Naive thymus-derived CD4-positive, alpha-beta T cell (primary cell): ENCODE measurements at regions of chr18 and their contacts with region 1.

Region 1: GRCh38 chr18:57621246-57621604 is 411 bp downstream of the NARS1 start:
- DNase-seq: no peak
- ATAC-seq: peak; percentile 4
- H3K4me3 ChIP-seq: peak overlapping the region; percentile 84
- H3K4me3 Mint-ChIP-seq: peak overlapping the region; percentile 89 to 99 (median 96)
- H3K27ac ChIP-seq: peak overlapping the region; percentile 85
- H3K27ac Mint-ChIP-seq: peak overlapping the region; percentile 93 to 99 (median 98)
- H3K4me1 ChIP-seq: peaks cover 13 to 19% of the 10 kb centered on the region in 2 donors
- H3K4me1 Mint-ChIP-seq: peaks cover 9 to 44% (median 34%) of the 10 kb centered on the region in 7 donors
- H3K27me3 ChIP-seq: no peaks in the 10 kb centered on the region
- H3K27me3 Mint-ChIP-seq: no peaks in the 10 kb centered on the region

Region 2: GRCh38 chr18:57586251-57587049 is 34.8 kb before region 1 on chr18 and contains the start of gene FECH:
- CTCF ChIA-PET with region 1: no interaction called
- POLR2A ChIA-PET with region 1: interaction called, 6 read pairs
- intact Hi-C with region 1: loop called (anchors 1 kb)
- DNase-seq: peak; percentile 59 to 81 (median 73)
- ATAC-seq: peak; percentile 98
- H3K4me3 ChIP-seq: peak within 1 kb of the TSS; percentile 61
- H3K4me3 Mint-ChIP-seq: peak within 1 kb of the TSS; percentile 81 to 95 (median 89)
- H3K27ac ChIP-seq: peak within 1 kb of the TSS; percentile 75
- H3K27ac Mint-ChIP-seq: peak within 1 kb of the TSS; percentile 65 to 90 (median 83)
- H3K4me1 ChIP-seq: peaks cover 9 to 11% of the 10 kb centered on the region in 2 donors
- H3K4me1 Mint-ChIP-seq: peaks cover 10 to 35% (median 23%) of the 10 kb centered on the region in 7 donors
- H3K27me3 ChIP-seq: no peaks in the 10 kb centered on the region
- H3K27me3 Mint-ChIP-seq: no peaks in the 10 kb centered on the region
- total RNA-seq, gene FECH: 11.7 to 15.3 (median 13.5) TPM

Region 3: GRCh38 chr18:58124475-58124874 is 503.2 kb after region 1 on chr18:
- CTCF ChIA-PET with region 1: no interaction called
- POLR2A ChIA-PET with region 1: no interaction called
- intact Hi-C with region 1: loop called in 1 of 2 experiments (anchors 5 kb)
- DNase-seq: no peak
- ATAC-seq: no peak
- H3K4me3 ChIP-seq: no peak overlapping the region
- H3K4me3 Mint-ChIP-seq: no peak overlapping the region
- H3K27ac ChIP-seq: no peak overlapping the region
- H3K27ac Mint-ChIP-seq: peak overlapping the region in 2 of 9 donors; percentile 7 to 58
- H3K4me1 ChIP-seq: no peaks in the 10 kb centered on the region
- H3K4me1 Mint-ChIP-seq: peaks cover 0 to 3% (median 0%) of the 10 kb centered on the region in 7 donors
- H3K27me3 ChIP-seq: no peaks in the 10 kb centered on the region
- H3K27me3 Mint-ChIP-seq: peaks cover 0 to 9% (median 3%) of the 10 kb centered on the region in 5 donors

Region 4: GRCh38 chr18:59358712-59359575 is 1737.7 kb after region 1 on chr18 and contains the start of gene LMAN1:
- CTCF ChIA-PET with region 1: no interaction called
- POLR2A ChIA-PET with region 1: no interaction called
- intact Hi-C with region 1: loop called (anchors 2 to 5 kb)
- DNase-seq: peak; percentile 73 to 98 (median 83)
- ATAC-seq: peak; percentile 97
- H3K4me3 ChIP-seq: peak within 1 kb of the TSS; percentile 81
- H3K4me3 Mint-ChIP-seq: peak within 1 kb of the TSS; percentile 88 to 99 (median 96)
- H3K27ac ChIP-seq: peak within 1 kb of the TSS; percentile 86
- H3K27ac Mint-ChIP-seq: peak within 1 kb of the TSS; percentile 90 to 98 (median 93)
- H3K4me1 ChIP-seq: peaks cover 3 to 20% of the 10 kb centered on the region in 2 donors
- H3K4me1 Mint-ChIP-seq: peaks cover 11 to 45% (median 39%) of the 10 kb centered on the region in 7 donors
- H3K27me3 ChIP-seq: no peaks in the 10 kb centered on the region
- H3K27me3 Mint-ChIP-seq: peaks cover 0 to 9% (median 0%) of the 10 kb centered on the region in 5 donors
- total RNA-seq, gene LMAN1: 34.6 to 120 (median 46.3) TPM